ENCODE measurements at regions of chr9 and their contacts with region 1.

Region 1: DNA sequence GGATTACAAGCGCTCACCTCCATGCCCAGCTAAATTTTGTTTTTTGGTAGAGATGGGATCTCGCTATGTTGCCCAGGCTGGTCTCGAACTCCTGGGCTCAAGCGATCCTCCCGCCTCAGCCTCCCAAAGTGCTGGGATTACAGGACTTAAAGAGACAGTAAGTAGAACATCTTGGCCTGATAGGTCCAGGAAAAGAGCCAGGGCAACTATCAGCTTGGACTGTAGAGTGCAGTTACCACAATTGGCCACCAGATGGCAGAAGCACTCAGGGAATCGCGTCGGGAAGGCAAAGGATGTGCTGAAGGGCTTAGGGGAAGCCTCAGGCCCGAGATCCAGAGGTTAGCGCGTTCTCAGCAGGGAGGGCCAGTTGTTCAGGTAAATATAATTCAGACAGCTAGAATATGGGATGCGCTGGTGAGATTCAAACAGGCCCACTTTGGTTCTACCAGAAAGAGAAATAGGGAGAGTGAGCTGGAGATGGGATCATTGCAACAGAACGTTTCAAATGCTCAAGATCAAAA is 21.5 kb downstream of the C9orf57 start:
- DNase-seq: peak; percentile 77 to 82 (median 78)
- ATAC-seq: peak; percentile 89
- H3K4me3 ChIP-seq: no peak overlapping the region
- H3K27ac ChIP-seq: no peak overlapping the region
- H3K4me1 ChIP-seq: peaks cover 2% of the 10 kb centered on the region
- H3K27me3 ChIP-seq: no peaks in the 10 kb centered on the region
- CTCF ChIP-seq: peak; percentile 80 to 97 (median 95)
- POLR2A ChIP-seq: no peak

Region 2: GRCh38 chr9:72119853-72120252 is 80.9 kb after region 1 on chr9:
- intact Hi-C with region 1: no loop called
- DNase-seq: no peak
- ATAC-seq: no peak
- H3K4me3 ChIP-seq: no peak overlapping the region
- H3K27ac ChIP-seq: no peak overlapping the region
- H3K4me1 ChIP-seq: peaks cover 12% of the 10 kb centered on the region
- H3K27me3 ChIP-seq: no peaks in the 10 kb centered on the region
- CTCF ChIP-seq: no peak
- POLR2A ChIP-seq: no peak

Region 3: GRCh38 chr9:72262063-72262462 is 223.1 kb after region 1 on chr9:
- intact Hi-C with region 1: loop called (anchors 5 kb)
- DNase-seq: no peak
- ATAC-seq: no peak
- H3K4me3 ChIP-seq: no peak overlapping the region
- H3K27ac ChIP-seq: no peak overlapping the region
- H3K4me1 ChIP-seq: no peaks in the 10 kb centered on the region
- H3K27me3 ChIP-seq: no peaks in the 10 kb centered on the region
- CTCF ChIP-seq: no peak
- POLR2A ChIP-seq: no peak

Region 4: DNA sequence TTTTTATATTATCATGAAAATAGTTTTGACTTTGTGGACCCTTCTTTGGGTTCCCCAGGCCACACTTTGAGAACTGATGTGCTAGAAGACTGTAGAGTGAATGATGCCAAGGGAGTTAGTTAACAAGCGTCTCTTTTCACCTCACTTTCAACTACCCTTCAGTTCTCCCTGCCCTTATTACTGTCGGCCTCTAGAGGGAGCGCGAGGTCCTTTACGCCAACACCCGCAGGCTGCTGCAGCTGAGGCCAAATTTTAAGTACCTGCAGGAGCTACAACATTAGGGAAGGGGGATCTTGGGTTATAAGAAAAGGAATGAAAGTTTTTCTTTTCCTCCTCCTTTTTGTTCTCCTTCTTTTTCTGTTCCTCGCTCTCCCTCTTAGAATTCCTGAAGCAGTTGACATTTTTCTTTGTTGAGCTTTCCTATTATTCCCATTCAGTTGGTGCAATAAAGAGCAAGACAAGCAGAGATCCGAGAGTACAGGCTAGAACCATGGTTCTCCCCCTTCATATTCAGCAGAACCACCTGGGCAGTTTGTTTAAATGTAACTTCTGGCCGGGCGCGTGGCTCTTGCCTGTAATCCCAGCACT is 242.1 kb after region 1 on chr9:
- intact Hi-C with region 1: loop called (anchors 5 kb)
- DNase-seq: peak; percentile 77 to 82 (median 82)
- ATAC-seq: peak; percentile 91
- H3K4me3 ChIP-seq: no peak overlapping the region
- H3K27ac ChIP-seq: no peak overlapping the region
- H3K4me1 ChIP-seq: no peaks in the 10 kb centered on the region
- H3K27me3 ChIP-seq: no peaks in the 10 kb centered on the region
- CTCF ChIP-seq: peak; percentile 80 to 89 (median 86)
- POLR2A ChIP-seq: no peak

Region 5: GRCh38 chr9:72812559-72813111 is 773.7 kb after region 1 on chr9:
- intact Hi-C with region 1: loop called (anchors 10 kb)
- DNase-seq: no peak
- ATAC-seq: no peak
- H3K4me3 ChIP-seq: no peak overlapping the region
- H3K27ac ChIP-seq: no peak overlapping the region
- H3K4me1 ChIP-seq: peaks cover 14% of the 10 kb centered on the region
- H3K27me3 ChIP-seq: no peaks in the 10 kb centered on the region
- CTCF ChIP-seq: no peak
- POLR2A ChIP-seq: no peak

Measured in body of pancreas (tissue), 4 donors.